ENCODE measurements at regions of chr15 and their contacts with region 1.

Region 1: DNA sequence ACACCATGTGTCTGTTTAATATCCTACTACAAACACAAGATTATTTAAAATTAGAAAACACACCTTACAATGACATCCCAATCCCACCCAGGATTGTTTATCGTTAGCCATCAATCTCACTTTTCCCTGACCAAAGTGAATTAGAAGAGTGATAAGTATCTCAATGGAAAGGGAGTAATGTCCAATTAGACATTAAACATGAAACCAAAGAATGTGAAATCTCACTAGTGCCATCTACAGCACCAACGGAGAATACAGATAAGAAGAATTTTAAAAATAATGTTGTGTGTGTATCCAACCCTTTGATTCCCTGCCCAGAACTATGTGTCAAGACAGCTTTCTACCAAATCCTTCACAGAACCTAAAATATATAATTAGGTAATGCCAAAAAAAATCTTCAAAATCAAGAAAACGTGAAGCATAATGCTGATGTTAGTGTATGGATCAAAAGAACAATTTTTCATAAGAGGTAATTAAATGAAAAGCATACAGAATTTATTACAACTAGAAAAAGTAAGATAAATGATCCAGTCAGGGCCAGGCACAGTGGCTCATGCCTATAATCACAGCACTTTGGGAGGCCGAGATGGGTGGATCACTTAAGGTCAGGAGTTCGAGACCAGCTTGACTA is 64.2 kb downstream of the SCAPER start:
- DNase-seq: no peak
- H3K4me3 Mint-ChIP-seq: no peak overlapping the region
- H3K27ac Mint-ChIP-seq: no peak overlapping the region
- H3K4me1 Mint-ChIP-seq: no peaks in the 10 kb centered on the region
- H3K27me3 Mint-ChIP-seq: no peaks in the 10 kb centered on the region
- CTCF ChIP-seq: peak; percentile 49

Region 2: DNA sequence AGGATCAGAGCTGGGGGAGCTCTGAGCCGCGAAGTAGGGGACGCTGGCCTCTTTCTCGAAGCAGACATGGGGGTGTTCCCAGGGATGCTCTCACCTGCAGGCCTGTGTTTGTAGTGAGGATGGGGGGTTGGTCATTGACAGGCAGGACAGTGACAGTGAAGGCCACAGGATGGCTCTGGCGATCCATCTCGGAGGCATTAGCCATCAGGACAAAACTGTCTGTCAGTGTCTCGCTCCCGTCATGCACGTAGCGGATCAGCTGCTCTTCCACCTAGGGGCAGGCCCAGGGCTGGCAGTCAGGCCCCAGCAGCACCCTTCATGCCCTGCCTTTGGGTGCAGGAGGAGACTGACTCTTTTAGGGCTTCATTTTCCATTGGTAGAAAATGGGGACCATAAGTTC is 1156.3 kb before region 1 on chr15:
- CTCF ChIA-PET with region 1: no interaction called
- intact Hi-C with region 1: no loop called
- DNase-seq: no peak
- H3K4me3 Mint-ChIP-seq: no peak overlapping the region
- H3K27ac Mint-ChIP-seq: no peak overlapping the region
- H3K4me1 Mint-ChIP-seq: no peaks in the 10 kb centered on the region
- H3K27me3 Mint-ChIP-seq: no peaks in the 10 kb centered on the region
- CTCF ChIP-seq: no peak

Region 3: GRCh38 chr15:76190834-76191538 is 650.0 kb before region 1 on chr15:
- CTCF ChIA-PET with region 1: no interaction called
- intact Hi-C with region 1: loop called (anchors 10 kb)
- DNase-seq: peak; percentile 88
- H3K4me3 Mint-ChIP-seq: peak overlapping the region; percentile 39
- H3K27ac Mint-ChIP-seq: peak overlapping the region; percentile 10
- H3K4me1 Mint-ChIP-seq: peaks cover 19% of the 10 kb centered on the region
- H3K27me3 Mint-ChIP-seq: peaks cover 23% of the 10 kb centered on the region
- CTCF ChIP-seq: peak; percentile 87

Measured in Calu3 (cell line).